Naive thymus-derived CD4-positive, alpha-beta T cell (primary cell): ENCODE measurements at regions of chrX and their contacts with region 1.

Region 1: DNA sequence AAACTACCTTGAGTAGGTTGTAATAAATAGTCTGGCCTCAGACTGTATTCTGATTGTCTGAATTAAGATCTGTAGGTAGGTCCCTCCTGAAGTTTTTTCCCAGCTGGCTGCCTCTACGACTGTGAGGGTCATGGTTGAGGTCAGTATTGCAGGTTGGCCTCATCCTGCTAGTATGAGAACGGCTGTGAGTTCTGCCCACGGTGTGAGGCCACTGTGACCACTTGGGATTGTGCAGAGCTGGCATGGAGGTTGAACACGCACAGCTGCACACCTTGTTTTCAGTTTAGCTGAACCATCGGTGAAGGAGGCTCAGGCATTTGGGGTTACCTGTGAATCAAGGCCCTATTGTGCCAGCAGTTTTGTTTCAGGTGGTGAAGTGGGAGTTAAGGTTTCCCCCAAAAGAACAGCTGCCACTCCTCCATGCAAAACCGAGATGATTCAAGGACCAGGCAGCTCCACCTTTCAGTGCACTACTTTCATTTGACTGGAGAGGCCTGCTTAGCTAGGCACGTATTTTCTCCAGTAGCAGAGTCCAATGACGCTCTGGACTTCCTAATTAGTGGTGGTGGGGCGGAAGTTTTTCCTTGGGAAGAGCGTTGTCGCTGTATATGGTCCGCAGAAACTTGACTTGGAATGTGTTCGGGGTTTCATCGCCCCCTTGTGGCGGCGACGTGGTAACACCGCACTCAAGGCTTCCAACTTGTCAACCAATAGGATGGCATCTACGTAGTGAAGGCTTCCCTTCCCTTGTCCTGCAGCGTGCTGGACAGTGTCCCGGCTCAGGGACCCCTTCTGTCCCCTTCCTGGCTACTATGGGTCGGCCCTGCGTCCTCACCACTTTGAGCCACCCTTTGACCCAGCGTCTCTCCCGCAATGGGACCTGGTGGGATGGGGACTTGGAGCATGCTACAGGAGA is 13.8 kb downstream of the CMC4 start:
- DNase-seq: peak; percentile 20 to 55 (median 36)
- ATAC-seq: peak; percentile 93
- H3K4me3 ChIP-seq: peak overlapping the region; percentile 47
- H3K4me3 Mint-ChIP-seq: peak overlapping the region; percentile 52 to 81 (median 76)
- H3K27ac ChIP-seq: peak overlapping the region; percentile 30
- H3K27ac Mint-ChIP-seq: peak overlapping the region in 8 of 9 donors; percentile 23 to 81 (median 60)
- H3K4me1 ChIP-seq: peaks cover 0 to 5% of the 10 kb centered on the region in 2 donors
- H3K4me1 Mint-ChIP-seq: peaks cover 0 to 31% (median 21%) of the 10 kb centered on the region in 7 donors
- H3K27me3 ChIP-seq: no peaks in the 10 kb centered on the region
- H3K27me3 Mint-ChIP-seq: no peaks in the 10 kb centered on the region

Region 2: GRCh38 chrX:154986826-154987576 is 70.1 kb before region 1 on chrX:
- CTCF ChIA-PET with region 1: interaction called, 7 read pairs
- POLR2A ChIA-PET with region 1: interaction called, 3 read pairs
- intact Hi-C with region 1: loop called in 1 of 2 experiments (anchors 1 kb)
- DNase-seq: peak in 1 of 9 donors; percentile 4
- ATAC-seq: no peak
- H3K4me3 ChIP-seq: no peak overlapping the region
- H3K4me3 Mint-ChIP-seq: no peak overlapping the region
- H3K27ac ChIP-seq: no peak overlapping the region
- H3K27ac Mint-ChIP-seq: no peak overlapping the region
- H3K4me1 ChIP-seq: no peaks in the 10 kb centered on the region
- H3K4me1 Mint-ChIP-seq: no peaks in the 10 kb centered on the region
- H3K27me3 ChIP-seq: peaks cover 0 to 3% of the 10 kb centered on the region in 2 donors
- H3K27me3 Mint-ChIP-seq: peaks cover 0 to 5% (median 0%) of the 10 kb centered on the region in 5 donors

Region 3: DNA sequence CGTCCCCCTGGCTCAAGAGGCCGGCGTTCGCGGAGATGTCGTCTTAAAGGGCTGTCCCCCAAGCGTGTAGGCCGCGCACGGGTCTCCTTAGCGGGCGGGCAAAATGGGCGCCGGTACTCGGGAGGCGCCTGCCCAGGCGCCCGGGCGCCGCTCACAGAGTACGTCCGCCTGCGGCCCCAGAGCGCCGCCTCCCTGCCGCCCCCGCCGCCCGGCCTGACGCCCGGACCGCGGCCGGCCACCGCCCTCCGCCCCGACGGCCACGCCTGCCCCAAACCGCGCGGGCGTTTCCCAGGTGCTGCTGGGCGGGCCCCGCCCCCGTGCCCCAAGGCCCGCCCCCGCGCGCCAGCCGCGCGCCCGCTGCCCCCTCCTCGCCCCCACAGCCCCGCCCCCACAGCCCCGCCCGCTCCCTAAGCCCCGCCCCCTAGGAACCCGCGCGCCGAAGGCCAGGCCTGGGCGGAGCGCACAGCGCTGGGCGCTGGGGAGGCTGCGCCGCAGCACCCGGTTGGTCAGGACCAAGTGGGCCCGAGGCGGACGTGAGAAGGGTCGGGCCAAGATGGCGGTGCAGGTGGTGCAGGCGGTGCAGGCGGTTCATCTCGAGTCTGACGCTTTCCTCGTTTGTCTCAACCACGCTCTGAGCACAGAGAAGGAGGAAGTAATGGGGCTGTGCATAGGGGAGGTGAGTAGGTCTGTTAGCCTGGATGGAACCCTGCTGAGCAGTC is 14.0 kb after region 1 on chrX and contains the starts of genes BRCC3, CMC4 and MTCP1:
- CTCF ChIA-PET with region 1: interaction called, 3 read pairs
- POLR2A ChIA-PET with region 1: interaction called, 6 read pairs
- intact Hi-C with region 1: loop called (anchors 2 kb)
- DNase-seq: peak; percentile 62 to 77 (median 74)
- ATAC-seq: peak; percentile 90
- H3K4me3 ChIP-seq: peak within 1 kb of the TSS; percentile 76
- H3K4me3 Mint-ChIP-seq: peak within 1 kb of the TSS; percentile 81 to 94 (median 89)
- H3K27ac ChIP-seq: peak within 1 kb of the TSS; percentile 82
- H3K27ac Mint-ChIP-seq: peak within 1 kb of the TSS; percentile 83 to 96 (median 94)
- H3K4me1 ChIP-seq: peaks cover 6 to 12% of the 10 kb centered on the region in 2 donors
- H3K4me1 Mint-ChIP-seq: peaks cover 30 to 62% (median 54%) of the 10 kb centered on the region in 7 donors
- H3K27me3 ChIP-seq: no peaks in the 10 kb centered on the region
- H3K27me3 Mint-ChIP-seq: no peaks in the 10 kb centered on the region
- total RNA-seq, gene BRCC3: 11.5 to 27.8 (median 15.2) TPM
- total RNA-seq, gene CMC4: 3.1 to 6.0 (median 5.1) TPM
- total RNA-seq, gene MTCP1: 10.3 to 21.5 (median 17.1) TPM

Region 4: GRCh38 chrX:155086202-155086840 is 29.2 kb after region 1 on chrX:
- CTCF ChIA-PET with region 1: no interaction called
- POLR2A ChIA-PET with region 1: no interaction called
- intact Hi-C with region 1: loop called in 1 of 2 experiments (anchors 2 kb)
- DNase-seq: peak in 8 of 9 donors; percentile 13 to 39 (median 22)
- ATAC-seq: peak; percentile 53
- H3K4me3 ChIP-seq: no peak overlapping the region
- H3K4me3 Mint-ChIP-seq: no peak overlapping the region
- H3K27ac ChIP-seq: no peak overlapping the region
- H3K27ac Mint-ChIP-seq: no peak overlapping the region
- H3K4me1 ChIP-seq: no peaks in the 10 kb centered on the region
- H3K4me1 Mint-ChIP-seq: peaks cover 0 to 6% (median 0%) of the 10 kb centered on the region in 7 donors
- H3K27me3 ChIP-seq: no peaks in the 10 kb centered on the region
- H3K27me3 Mint-ChIP-seq: no peaks in the 10 kb centered on the region